Heart right ventricle (tissue), 16 donors: ENCODE measurements at regions of chr1 and their contacts with region 1.

Region 1: GRCh38 chr1:154558575-154559465 is at the start of gene UBE2Q1:
- DNase-seq: peak; percentile 98 to 99
- ATAC-seq: peak; percentile 96 to 98 (median 97)
- H3K4me3 ChIP-seq: peak within 1 kb of the TSS; percentile 69 to 97 (median 93)
- H3K27ac ChIP-seq: peak within 1 kb of the TSS; percentile 77 to 98 (median 94)
- H3K4me1 ChIP-seq: peaks cover 13 to 39% (median 27%) of the 10 kb centered on the region in 9 donors
- H3K27me3 ChIP-seq: no peaks in the 10 kb centered on the region
- CTCF ChIP-seq: no peak
- total RNA-seq, gene UBE2Q1: 49.1 to 83.5 (median 59.0) TPM

Region 2: DNA sequence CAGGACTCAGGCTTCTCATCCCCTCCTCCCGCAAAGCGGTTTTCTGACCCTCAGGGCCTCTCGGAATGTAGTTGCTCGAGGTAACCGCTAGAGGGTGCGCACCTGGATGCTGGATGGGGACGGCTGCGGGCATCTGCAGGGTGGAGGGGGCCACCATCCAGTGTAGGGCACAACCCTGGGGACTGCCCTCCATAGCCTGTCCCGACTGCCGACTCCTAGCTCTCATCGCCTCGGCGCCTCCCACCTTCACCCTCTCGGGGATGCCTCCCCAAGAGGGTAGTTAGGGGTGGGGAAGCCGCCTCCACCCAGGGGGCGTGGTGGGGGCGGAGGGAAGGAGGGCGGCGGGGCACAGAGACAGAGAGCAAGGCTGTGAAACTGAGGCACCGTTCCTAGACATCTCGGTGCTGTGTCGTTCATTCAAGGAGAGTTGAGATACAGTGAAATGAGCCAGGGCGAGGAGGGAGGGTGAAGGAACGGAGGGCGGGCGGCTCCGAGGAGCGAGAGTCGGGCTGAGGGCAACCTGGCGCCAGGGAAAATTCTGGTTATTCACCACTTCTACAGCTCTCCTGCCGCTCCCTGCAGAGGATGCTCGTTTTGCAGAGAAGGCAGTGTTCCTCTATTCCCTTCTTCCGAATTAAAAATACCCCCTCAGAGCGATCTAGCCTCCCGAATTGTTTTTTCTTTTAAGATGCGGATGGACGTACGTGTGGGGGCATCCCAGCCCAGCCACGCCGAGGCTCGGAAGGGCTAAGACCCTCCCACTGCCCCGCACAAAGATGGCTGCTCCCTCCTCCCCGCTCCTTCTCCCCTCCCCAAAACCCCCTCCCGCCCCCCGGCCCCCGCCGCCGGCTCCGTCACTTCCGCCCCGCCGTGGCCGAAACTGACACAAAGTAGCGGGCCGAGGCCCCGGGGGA is 233.9 kb before region 1 on chr1 and contains the start of gene ATP8B2:
- intact Hi-C with region 1: loop called in 1 of 10 experiments (anchors 10 kb)
- DNase-seq: peak; percentile 74 to 80
- ATAC-seq: peak; percentile 37 to 78 (median 59)
- H3K4me3 ChIP-seq: peak within 1 kb of the TSS; percentile 69 to 89 (median 78)
- H3K27ac ChIP-seq: peak within 1 kb of the TSS; percentile 53 to 94 (median 92)
- H3K4me1 ChIP-seq: peaks cover 19 to 61% (median 48%) of the 10 kb centered on the region in 9 donors
- H3K27me3 ChIP-seq: peaks cover 0 to 33% (median 0%) of the 10 kb centered on the region in 7 donors
- CTCF ChIP-seq: peak; percentile 86 to 96 (median 94)
- total RNA-seq, gene ATP8B2: 10.3 to 17.3 (median 13.3) TPM

Region 3: GRCh38 chr1:154607609-154608396 is 49.0 kb after region 1 on chr1 and contains the start of gene ADAR:
- intact Hi-C with region 1: loop called in 2 of 10 experiments (anchors 2 to 5 kb)
- DNase-seq: peak; percentile 86 to 95
- ATAC-seq: peak; percentile 83 to 95 (median 94)
- H3K4me3 ChIP-seq: peak within 1 kb of the TSS; percentile 66 to 99 (median 90)
- H3K27ac ChIP-seq: peak within 1 kb of the TSS; percentile 87 to 99 (median 98)
- H3K4me1 ChIP-seq: peaks cover 4 to 82% (median 60%) of the 10 kb centered on the region in 9 donors
- H3K27me3 ChIP-seq: no peaks in the 10 kb centered on the region
- CTCF ChIP-seq: no peak
- total RNA-seq, gene ADAR: 45.3 to 103 (median 55.3) TPM

Region 4: DNA sequence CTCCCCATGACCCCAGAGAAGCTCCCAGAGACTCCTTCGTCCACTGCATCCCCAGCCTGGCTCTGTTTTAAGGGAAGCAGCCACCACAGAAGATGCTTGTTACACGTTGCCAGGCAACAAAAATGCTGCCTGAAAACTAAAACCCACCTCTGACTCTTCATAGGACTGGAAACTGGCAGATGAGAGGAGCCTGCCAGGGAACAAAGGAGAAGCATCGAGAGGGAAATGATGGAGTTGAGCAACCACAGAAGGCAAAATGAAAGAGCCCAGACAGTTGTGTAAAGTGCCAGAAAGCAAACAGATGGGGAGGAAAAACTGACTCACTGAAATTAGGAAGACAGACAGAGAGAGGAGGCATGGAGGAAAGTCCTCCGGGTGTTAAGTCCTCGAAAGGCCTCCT is 192.9 kb after region 1 on chr1:
- intact Hi-C with region 1: loop called in 4 of 10 experiments (anchors 10 kb)
- DNase-seq: no peak
- ATAC-seq: peak in 7 of 8 donors; percentile 41 to 77 (median 48)
- H3K4me3 ChIP-seq: no peak overlapping the region
- H3K27ac ChIP-seq: peak overlapping the region in 3 of 10 donors; percentile 7 to 37 (median 22)
- H3K4me1 ChIP-seq: peaks cover 0 to 38% (median 7%) of the 10 kb centered on the region in 9 donors
- H3K27me3 ChIP-seq: peaks cover 0 to 4% (median 0%) of the 10 kb centered on the region in 7 donors
- CTCF ChIP-seq: no peak

Region 5: GRCh38 chr1:154870115-154870571 is 311.3 kb after region 1 on chr1 and contains the start of gene KCNN3:
- intact Hi-C with region 1: loop called in 5 of 10 experiments (anchors 5 kb)
- DNase-seq: peak; percentile 93
- ATAC-seq: peak; percentile 96 to 98 (median 98)
- H3K4me3 ChIP-seq: peak within 1 kb of the TSS; percentile 11 to 66 (median 56)
- H3K27ac ChIP-seq: peak within 1 kb of the TSS in 8 of 10 donors; percentile 23 to 68 (median 40)
- H3K4me1 ChIP-seq: peaks cover 8 to 47% (median 38%) of the 10 kb centered on the region in 9 donors
- H3K27me3 ChIP-seq: peaks cover 0 to 26% (median 0%) of the 10 kb centered on the region in 7 donors
- CTCF ChIP-seq: no peak
- total RNA-seq, gene KCNN3: 0.52 to 5.9 (median 2.7) TPM

Region 6: GRCh38 chr1:154936555-154937084 is 377.8 kb after region 1 on chr1 and contains the start of gene PMVK:
- intact Hi-C with region 1: loop called in 4 of 10 experiments (anchors 2 to 10 kb)
- DNase-seq: peak; percentile 92 to 98
- ATAC-seq: peak; percentile 92 to 97 (median 96)
- H3K4me3 ChIP-seq: peak within 1 kb of the TSS; percentile 44 to 70 (median 64)
- H3K27ac ChIP-seq: peak within 1 kb of the TSS; percentile 87 to 99 (median 96)
- H3K4me1 ChIP-seq: peaks cover 7 to 43% (median 25%) of the 10 kb centered on the region in 9 donors
- H3K27me3 ChIP-seq: no peaks in the 10 kb centered on the region
- CTCF ChIP-seq: peak in 8 of 9 donors; percentile 11 to 62 (median 36)
- total RNA-seq, gene PMVK: 29.9 to 66.4 (median 39.4) TPM